Transverse colon (tissue), 4 donors: ENCODE measurements at regions of chr7 and their contacts with region 1.

Region 1: GRCh38 chr7:64794171-64794844 is at the start of gene ZNF138:
- DNase-seq: peak; percentile 96
- H3K4me3 ChIP-seq: peak within 1 kb of the TSS; percentile 40 to 87 (median 66)
- H3K27ac ChIP-seq: peak within 1 kb of the TSS; percentile 84 to 90 (median 86)
- H3K4me1 ChIP-seq: peaks cover 7 to 18% (median 9%) of the 10 kb centered on the region in 4 donors
- H3K27me3 ChIP-seq: no peaks in the 10 kb centered on the region
- CTCF ChIP-seq: peak in 2 of 5 experiments; percentile 31 to 33
- EP300 ChIP-seq: no peak
- POLR2A ChIP-seq: peak; percentile 70
- total RNA-seq, gene ZNF138: 4.2 to 17.2 (median 10.9) TPM

Region 2: GRCh38 chr7:64562626-64563275 is 231.6 kb before region 1 on chr7 and contains the start of gene ZNF680:
- in situ Hi-C with region 1: loop called in 1 of 4 experiments (anchors 25 kb)
- intact Hi-C with region 1: no loop called
- DNase-seq: peak; percentile 95
- H3K4me3 ChIP-seq: peak within 1 kb of the TSS; percentile 71 to 86 (median 76)
- H3K27ac ChIP-seq: peak within 1 kb of the TSS; percentile 82 to 87 (median 84)
- H3K4me1 ChIP-seq: peaks cover 0 to 29% (median 9%) of the 10 kb centered on the region in 4 donors
- H3K27me3 ChIP-seq: no peaks in the 10 kb centered on the region
- CTCF ChIP-seq: no peak
- EP300 ChIP-seq: no peak
- POLR2A ChIP-seq: peak; percentile 64
- total RNA-seq, gene ZNF680: 3.4 to 11.1 (median 6.6) TPM

Region 3: GRCh38 chr7:64665980-64666662 is 128.2 kb before region 1 on chr7 and contains the start of gene ZNF107:
- in situ Hi-C with region 1: loop called in 1 of 4 experiments (anchors 25 kb)
- intact Hi-C with region 1: no loop called
- DNase-seq: peak; percentile 92
- H3K4me3 ChIP-seq: peak within 1 kb of the TSS; percentile 58 to 92 (median 76)
- H3K27ac ChIP-seq: peak within 1 kb of the TSS; percentile 72 to 84 (median 81)
- H3K4me1 ChIP-seq: peaks cover 4 to 16% (median 6%) of the 10 kb centered on the region in 4 donors
- H3K27me3 ChIP-seq: no peaks in the 10 kb centered on the region
- CTCF ChIP-seq: no peak
- EP300 ChIP-seq: no peak
- POLR2A ChIP-seq: peak; percentile 50
- total RNA-seq, gene ZNF107: 3.8 to 11.2 (median 8.4) TPM

Region 4: DNA sequence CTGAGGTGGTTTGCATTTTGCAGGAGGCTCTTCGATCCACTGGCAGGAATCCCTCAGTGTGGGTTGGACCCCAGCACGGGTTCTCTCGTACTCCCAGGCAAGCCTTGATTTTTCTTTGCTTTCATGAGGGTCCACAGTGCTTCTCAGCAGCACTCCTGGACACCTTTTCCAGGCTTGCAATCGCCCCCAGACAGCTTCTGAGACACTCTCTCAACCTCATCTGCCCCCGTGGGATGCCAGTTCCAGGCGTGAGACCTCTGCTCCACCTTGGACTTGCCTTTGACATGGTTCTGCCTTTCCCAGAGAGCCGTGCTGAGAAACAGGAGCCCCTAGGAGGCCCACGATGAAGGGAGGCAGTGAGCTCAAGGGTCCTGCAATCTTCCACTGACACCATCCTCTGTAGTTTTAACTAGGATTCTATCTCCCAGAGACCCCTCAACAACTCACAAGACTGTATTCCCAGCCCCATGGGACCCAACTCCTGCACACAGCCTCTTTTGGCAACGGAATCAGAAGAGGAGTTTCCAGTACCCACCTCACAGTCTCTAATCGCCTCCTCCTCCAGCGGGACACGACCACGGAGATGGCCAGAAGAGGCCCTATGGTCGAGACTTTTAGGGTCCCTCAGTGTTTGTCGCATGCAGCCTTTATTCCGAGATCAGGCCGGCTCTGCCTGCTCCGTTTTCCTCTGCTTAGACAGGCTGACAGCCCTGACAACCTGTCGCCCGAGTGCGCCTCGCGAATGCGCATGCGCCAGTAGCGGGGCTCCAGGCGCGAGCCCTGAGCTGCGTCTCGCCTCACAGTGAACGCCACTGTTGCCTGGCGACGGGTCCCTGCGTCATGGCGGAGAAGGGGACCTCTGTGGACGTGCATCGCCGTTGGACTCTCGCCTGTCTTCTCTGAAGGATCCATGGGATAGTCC is 82.7 kb after region 1 on chr7:
- in situ Hi-C with region 1: loop called in 1 of 4 experiments (anchors 25 kb)
- intact Hi-C with region 1: no loop called
- DNase-seq: peak; percentile 44
- H3K4me3 ChIP-seq: peak overlapping the region in 3 of 4 donors; percentile 22 to 37 (median 22)
- H3K27ac ChIP-seq: no peak overlapping the region
- H3K4me1 ChIP-seq: peaks cover 0 to 5% (median 2%) of the 10 kb centered on the region in 4 donors
- H3K27me3 ChIP-seq: peaks cover 1% of the 10 kb centered on the region
- CTCF ChIP-seq: no peak
- EP300 ChIP-seq: no peak
- POLR2A ChIP-seq: no peak